Panc1 (cell line): ENCODE measurements at regions of chr19 and their contacts with region 1.

Region 1: DNA sequence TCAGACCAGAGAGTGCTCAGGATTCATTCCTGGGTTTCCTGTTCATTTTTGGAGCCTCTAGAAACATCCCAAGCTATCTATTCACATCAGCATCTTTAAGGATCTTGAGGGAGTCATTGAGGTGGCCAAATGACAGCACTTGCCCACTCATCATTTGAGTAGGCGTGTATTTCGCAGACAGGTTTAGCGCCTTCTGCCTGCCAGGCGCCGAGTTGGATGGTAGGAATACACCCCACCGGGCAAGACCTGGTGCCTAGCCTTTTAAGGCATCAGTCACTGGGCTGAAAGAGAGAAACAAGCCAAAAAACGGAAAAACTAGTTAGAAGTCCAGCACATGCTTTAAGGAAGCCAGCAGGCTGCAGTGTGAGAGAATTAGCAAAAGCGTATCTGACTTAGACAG is 33.8 kb downstream of the PEX11G start:
- DNase-seq: no peak
- ATAC-seq: no peak
- H3K4me3 ChIP-seq: no peak overlapping the region
- H3K27ac ChIP-seq: no peak overlapping the region
- H3K4me1 ChIP-seq: no peaks in the 10 kb centered on the region
- H3K27me3 ChIP-seq: no peaks in the 10 kb centered on the region
- CTCF ChIP-seq: no peak

Region 2: DNA sequence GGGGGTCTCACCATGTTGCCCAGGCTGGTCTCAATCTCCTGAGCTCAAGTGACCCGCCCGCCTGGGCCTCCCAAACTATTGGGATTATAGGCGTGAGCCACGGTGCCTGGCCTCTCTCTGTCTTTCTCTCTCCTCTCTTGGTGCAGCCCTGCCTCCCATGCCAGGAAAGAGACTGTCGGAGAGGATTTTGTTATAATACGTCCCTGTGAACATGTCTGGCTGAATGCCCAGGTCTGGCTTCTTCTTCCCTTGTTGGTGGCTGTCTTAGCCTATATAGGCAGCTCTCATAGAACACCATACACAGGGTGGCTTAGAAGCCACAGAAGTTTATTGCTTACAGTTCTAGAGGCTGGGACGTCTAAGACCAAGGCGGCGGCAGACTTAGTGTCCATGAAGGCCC is 12.6 kb before region 1 on chr19:
- CTCF ChIA-PET with region 1: interaction called, 12 read pairs
- POLR2A ChIA-PET with region 1: no interaction called
- in situ Hi-C with region 1: no loop called
- intact Hi-C with region 1: no loop called
- DNase-seq: no peak
- ATAC-seq: no peak
- H3K4me3 ChIP-seq: no peak overlapping the region
- H3K27ac ChIP-seq: no peak overlapping the region
- H3K4me1 ChIP-seq: no peaks in the 10 kb centered on the region
- H3K27me3 ChIP-seq: no peaks in the 10 kb centered on the region
- CTCF ChIP-seq: no peak

Region 3: DNA sequence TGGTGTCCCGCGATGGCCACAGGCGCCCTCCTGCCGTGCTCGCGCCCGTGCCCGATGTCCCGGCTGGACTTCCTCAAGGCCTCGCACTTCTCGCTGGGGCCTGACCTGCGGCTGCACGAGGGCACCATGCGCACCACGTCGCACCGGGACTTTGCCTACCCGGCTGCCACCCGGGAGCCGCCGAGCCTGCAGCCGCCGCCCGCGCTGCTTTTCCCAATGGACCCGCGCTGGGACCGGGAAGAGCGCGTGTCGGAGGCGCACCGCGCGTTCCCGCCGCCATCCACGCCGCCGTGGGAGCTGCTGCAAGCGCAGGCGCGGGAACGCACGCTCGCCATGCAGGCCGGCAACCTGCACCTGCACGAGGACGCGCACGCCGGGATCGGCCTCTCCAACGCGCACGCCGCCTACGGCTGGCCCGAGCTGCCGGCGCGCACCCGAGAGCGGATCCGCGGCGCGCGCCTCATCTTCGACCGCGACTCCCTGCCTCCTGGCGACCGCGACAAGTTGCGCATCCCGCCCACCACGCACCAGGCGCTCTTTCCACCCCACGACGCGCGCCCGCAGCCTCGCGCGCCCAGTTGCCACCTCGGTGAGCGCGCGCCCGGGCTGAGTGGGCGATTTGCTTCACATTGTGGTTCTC is 45.9 kb after region 1 on chr19:
- CTCF ChIA-PET with region 1: no interaction called
- POLR2A ChIA-PET with region 1: no interaction called
- in situ Hi-C with region 1: no loop called
- intact Hi-C with region 1: no loop called
- DNase-seq: no peak
- ATAC-seq: peak; percentile 90
- H3K4me3 ChIP-seq: peak overlapping the region; percentile 43 to 45
- H3K27ac ChIP-seq: 0 out of 2 replicates have a peak overlapping the region, but pooled peaks have one; percentile 39
- H3K4me1 ChIP-seq: no peaks in the 10 kb centered on the region
- H3K27me3 ChIP-seq: no peaks in the 10 kb centered on the region
- CTCF ChIP-seq: no peak